Activated T-helper 1 cell treated with anti-CD3 and anti-CD28 coated beads, Interleukin-12 subunit alpha, Interleukin-12 subunit beta, Interleukin-2, Interleukin-4 antibody, amounts not matched to agents 30 ng/mL and 10 ng/mL and 1 ng/mL, durations not matched to agents 14 hours and 24 hours and 36 hours (primary cell): ENCODE measurements at regions of chr5 and their contacts with region 1.

Region 1: GRCh38 chr5:50744776-50745175 is 78.3 kb downstream of the PARP8 start:
- DNase-seq: no peak
- H3K4me3 Mint-ChIP-seq: peak overlapping the region; percentile 79
- H3K27ac Mint-ChIP-seq: peak overlapping the region; percentile 77
- H3K4me1 Mint-ChIP-seq: peaks cover 58% of the 10 kb centered on the region
- H3K27me3 Mint-ChIP-seq: no peaks in the 10 kb centered on the region

Region 2: DNA sequence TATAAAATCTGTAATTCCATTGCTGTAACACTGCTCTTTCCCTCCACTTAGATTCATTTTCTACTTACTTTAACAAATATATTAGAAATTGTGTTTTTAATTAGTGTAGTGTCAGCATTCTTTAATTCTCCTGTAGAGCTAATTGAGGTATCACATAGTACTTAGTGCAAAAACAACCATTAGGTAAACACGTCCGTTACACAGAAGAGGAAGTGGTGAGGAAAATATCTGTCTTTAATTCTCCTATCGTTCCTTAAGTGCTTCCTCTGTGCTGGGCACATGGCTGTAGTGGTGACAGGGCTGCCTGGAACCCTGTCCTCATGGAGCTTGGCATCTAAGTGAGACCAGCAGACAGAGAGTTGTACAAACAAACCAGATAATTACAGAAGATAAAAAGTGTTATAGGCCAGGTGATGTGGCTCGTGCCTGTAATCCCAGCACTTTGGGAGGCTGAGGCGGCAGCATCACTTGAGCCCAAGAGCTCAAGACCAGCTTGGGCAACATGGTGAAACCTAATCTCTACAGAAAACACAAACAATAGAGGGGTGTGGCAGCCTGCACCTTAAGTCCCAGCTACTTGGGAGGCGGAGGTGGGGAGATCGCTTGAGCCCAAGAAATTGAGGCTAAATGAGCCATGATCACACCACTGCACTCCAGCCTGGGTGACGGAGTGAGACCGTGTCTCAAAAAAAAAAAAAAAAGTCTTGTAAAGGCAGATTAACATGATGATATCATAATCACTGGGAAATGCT is 42.0 kb before region 1 on chr5:
- intact Hi-C with region 1: loop called (anchors 5 kb)
- DNase-seq: no peak
- H3K4me3 Mint-ChIP-seq: no peak overlapping the region
- H3K27ac Mint-ChIP-seq: peak overlapping the region; percentile 34
- H3K4me1 Mint-ChIP-seq: peaks cover 34% of the 10 kb centered on the region
- H3K27me3 Mint-ChIP-seq: no peaks in the 10 kb centered on the region

Region 3: DNA sequence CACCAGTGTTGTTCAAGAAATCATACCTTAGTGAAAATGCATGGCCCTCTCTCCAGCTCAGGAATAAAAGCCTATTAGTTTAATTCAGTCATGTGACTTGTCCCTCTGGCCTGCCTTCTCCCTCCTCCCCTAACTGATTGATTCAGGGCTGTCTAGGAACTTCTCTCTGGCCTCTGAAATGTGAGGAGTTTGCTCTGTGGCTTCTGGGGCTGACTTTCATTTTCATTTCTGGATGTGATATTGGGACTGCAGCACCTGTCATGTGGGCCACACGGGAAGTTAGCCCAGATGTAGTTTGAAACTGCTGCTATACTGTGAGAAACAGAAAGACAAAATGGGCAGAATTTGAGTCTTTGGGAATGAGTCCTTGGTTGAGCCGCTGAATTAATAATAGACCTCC is 33.5 kb before region 1 on chr5:
- intact Hi-C with region 1: loop called (anchors 1 kb)
- DNase-seq: peak; percentile 66
- H3K4me3 Mint-ChIP-seq: peak overlapping the region; percentile 69
- H3K27ac Mint-ChIP-seq: peak overlapping the region; percentile 83
- H3K4me1 Mint-ChIP-seq: peaks cover 57% of the 10 kb centered on the region
- H3K27me3 Mint-ChIP-seq: no peaks in the 10 kb centered on the region

Region 4: GRCh38 chr5:51138164-51138563 is 393.4 kb after region 1 on chr5:
- intact Hi-C with region 1: no loop called
- DNase-seq: no peak
- H3K4me3 Mint-ChIP-seq: no peak overlapping the region
- H3K27ac Mint-ChIP-seq: no peak overlapping the region
- H3K4me1 Mint-ChIP-seq: no peaks in the 10 kb centered on the region
- H3K27me3 Mint-ChIP-seq: no peaks in the 10 kb centered on the region